ENCODE measurements at regions of chr5 and their contacts with region 1.

Region 1: GRCh38 chr5:114101153-114101552 is 260.7 kb upstream of the KCNN2 start:
- DNase-seq: peak in 1 of 2 experiments; percentile 35
- H3K4me3 ChIP-seq: no peak overlapping the region
- H3K27ac ChIP-seq: no peak overlapping the region
- H3K4me1 ChIP-seq: no peaks in the 10 kb centered on the region
- H3K27me3 ChIP-seq: no peaks in the 10 kb centered on the region
- CTCF ChIP-seq: peak; percentile 67

Region 2: DNA sequence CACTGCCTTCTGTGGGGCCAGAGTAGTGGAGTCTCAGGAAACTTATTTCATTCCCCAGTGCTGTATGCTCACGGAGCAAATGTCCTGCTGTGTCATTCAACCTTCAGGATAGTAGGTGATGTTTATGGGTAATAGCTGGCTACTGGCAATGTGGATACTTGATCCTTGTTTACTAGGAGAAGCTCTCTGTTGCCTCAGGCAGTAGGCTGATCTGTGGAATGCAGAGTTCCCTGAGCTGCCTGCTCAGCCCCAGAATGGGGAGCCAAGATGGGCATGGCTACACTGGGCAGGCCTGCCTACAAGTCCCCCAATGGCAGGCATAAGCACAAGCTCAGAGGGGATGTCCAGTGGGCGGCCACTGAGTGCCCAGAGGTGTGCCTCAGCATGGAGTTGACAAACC is 62.4 kb before region 1 on chr5:
- CTCF ChIA-PET with region 1: no interaction called
- POLR2A ChIA-PET with region 1: no interaction called
- intact Hi-C with region 1: no loop called
- DNase-seq: no peak
- H3K4me3 ChIP-seq: no peak overlapping the region
- H3K27ac ChIP-seq: no peak overlapping the region
- H3K4me1 ChIP-seq: no peaks in the 10 kb centered on the region
- H3K27me3 ChIP-seq: no peaks in the 10 kb centered on the region
- CTCF ChIP-seq: no peak

Region 3: GRCh38 chr5:114305402-114306211 is 204.5 kb after region 1 on chr5:
- CTCF ChIA-PET with region 1: no interaction called
- POLR2A ChIA-PET with region 1: no interaction called
- intact Hi-C with region 1: loop called (anchors 1 kb)
- DNase-seq: no peak
- H3K4me3 ChIP-seq: no peak overlapping the region
- H3K27ac ChIP-seq: no peak overlapping the region
- H3K4me1 ChIP-seq: no peaks in the 10 kb centered on the region
- H3K27me3 ChIP-seq: no peaks in the 10 kb centered on the region; the same call in 1 of the 2 replicates
- CTCF ChIP-seq: no peak; the same call in 1 of the 2 replicates